ENCODE measurements at regions of chr17 and their contacts with region 1.

Region 1: GRCh38 chr17:75430159-75430974 is 24.9 kb upstream of the GRB2 start:
- DNase-seq: peak in 1 of 2 donors; percentile 14
- H3K4me3 ChIP-seq: no peak overlapping the region
- H3K27ac ChIP-seq: no peak overlapping the region
- H3K4me1 ChIP-seq: peaks cover 0 to 14% of the 10 kb centered on the region in 2 donors
- H3K27me3 ChIP-seq: no peaks in the 10 kb centered on the region
- CTCF ChIP-seq: no peak
- POLR2A ChIP-seq: no peak

Region 2: GRCh38 chr17:75261336-75262111 is 168.8 kb before region 1 on chr17 and contains the starts of genes GGA3 and MRPS7:
- intact Hi-C with region 1: no loop called
- DNase-seq: peak; percentile 95 to 96
- H3K4me3 ChIP-seq: peak within 1 kb of the TSS; percentile 43 to 99 (median 76)
- H3K27ac ChIP-seq: peak within 1 kb of the TSS; percentile 92 to 97 (median 96)
- H3K4me1 ChIP-seq: peaks cover 19 to 24% of the 10 kb centered on the region in 2 donors
- H3K27me3 ChIP-seq: no peaks in the 10 kb centered on the region
- CTCF ChIP-seq: peak in 1 of 6 experiments; percentile 19
- POLR2A ChIP-seq: peak; percentile 3 to 71
- total RNA-seq, gene GGA3: 22.5 to 38.4 (median 24.1) TPM
- total RNA-seq, gene MRPS7: 29.9 to 59.4 (median 41.0) TPM

Region 3: DNA sequence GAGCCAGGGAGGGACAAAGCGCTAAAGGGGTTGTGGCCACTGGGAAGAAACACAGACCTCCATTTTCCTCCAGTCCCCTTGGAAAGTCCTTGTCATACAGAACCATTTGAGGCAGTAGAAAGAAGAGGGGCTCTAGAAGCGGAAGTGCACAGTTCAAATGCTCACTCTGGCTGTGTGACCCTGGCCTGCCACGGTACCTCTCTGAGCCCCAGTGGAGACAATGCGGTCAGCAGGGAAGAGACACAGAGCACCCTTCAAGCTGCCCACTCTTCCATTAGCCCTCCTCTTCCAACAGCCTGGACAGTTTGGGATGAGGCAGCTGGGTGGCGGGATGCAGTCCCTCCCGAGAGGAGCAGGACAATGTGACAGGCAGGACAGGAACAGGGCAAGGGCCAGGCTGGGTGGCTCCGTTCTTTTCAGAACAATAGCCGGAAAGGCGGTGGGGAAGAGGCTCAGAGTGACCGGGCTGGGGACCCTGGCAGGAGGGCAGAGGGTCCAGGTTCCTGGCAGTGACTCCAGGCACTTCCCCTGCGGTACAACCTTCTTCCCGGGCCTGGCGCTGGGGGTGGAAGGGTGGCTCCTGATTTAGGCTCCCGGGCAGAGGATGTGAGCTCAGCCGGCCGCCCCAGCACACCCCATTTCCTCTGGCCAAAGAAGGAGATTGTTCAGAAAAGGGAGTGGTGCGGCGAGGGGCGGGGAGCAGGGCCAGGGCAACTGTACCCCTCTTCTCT is 79.3 kb after region 1 on chr17:
- intact Hi-C with region 1: loop called (anchors 5 kb)
- DNase-seq: peak; percentile 25 to 40
- H3K4me3 ChIP-seq: no peak overlapping the region
- H3K27ac ChIP-seq: peak overlapping the region; percentile 54 to 87 (median 70)
- H3K4me1 ChIP-seq: peaks cover 39 to 43% of the 10 kb centered on the region in 2 donors
- H3K27me3 ChIP-seq: no peaks in the 10 kb centered on the region
- CTCF ChIP-seq: no peak
- POLR2A ChIP-seq: no peak

Region 4: GRCh38 chr17:75524953-75525719 is 94.8 kb after region 1 on chr17 and contains the start of gene LLGL2:
- intact Hi-C with region 1: loop called (anchors 5 kb)
- DNase-seq: peak; percentile 89 to 91
- H3K4me3 ChIP-seq: peak within 1 kb of the TSS; percentile 53 to 82 (median 61)
- H3K27ac ChIP-seq: peak within 1 kb of the TSS; percentile 69 to 86 (median 80)
- H3K4me1 ChIP-seq: peaks cover 16 to 25% of the 10 kb centered on the region in 2 donors
- H3K27me3 ChIP-seq: no peaks in the 10 kb centered on the region
- CTCF ChIP-seq: peak in 3 of 6 experiments; percentile 30 to 55 (median 51)
- POLR2A ChIP-seq: peak in 1 of 2 donors; percentile 93
- total RNA-seq, gene LLGL2: 35.6 to 73.5 (median 53.8) TPM

Region 5: DNA sequence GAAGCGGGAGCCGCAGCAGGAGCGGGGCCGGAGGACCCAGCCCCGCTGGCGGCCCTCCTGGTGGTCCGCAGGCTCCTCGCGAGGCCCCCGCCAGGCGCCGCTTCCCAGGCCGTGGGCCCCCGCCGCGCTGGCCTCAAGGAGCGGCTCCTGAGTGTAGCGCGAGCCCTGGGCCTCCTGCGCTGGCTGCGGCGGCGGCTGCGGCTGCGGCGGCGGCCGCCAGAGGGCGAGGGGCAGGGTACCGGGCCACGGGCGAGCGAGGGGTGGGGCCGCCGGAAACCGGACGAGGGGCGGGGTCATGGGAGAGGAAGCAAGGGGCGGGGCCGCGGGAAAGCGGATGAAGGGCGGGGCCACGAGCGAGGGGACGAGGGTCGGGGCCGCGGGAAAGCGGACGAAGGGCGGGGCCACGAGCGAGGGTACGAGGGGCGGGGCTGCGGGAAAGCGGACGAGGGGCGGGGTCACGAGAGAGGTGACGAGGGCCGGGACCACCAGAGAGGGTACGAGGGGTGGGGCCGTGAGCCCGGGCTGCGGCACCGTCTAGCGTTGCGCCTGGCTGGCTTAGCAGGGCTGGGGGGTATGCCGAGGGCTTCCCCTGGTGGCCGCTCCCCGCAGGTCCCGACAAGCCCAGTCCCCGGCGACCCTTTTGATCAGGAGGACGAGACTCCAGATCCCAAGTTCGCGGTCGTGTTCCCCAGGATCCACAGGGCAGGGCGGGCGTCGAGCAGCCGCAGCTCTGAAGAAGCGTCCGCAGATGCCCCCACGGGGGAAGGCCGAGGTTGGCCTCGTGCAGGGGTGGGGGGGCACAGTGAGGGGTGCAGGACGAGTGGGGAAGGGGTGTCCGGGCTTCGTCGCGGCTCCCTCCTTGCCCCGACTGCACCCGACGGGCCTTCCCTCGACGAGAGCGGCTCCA is 158.9 kb after region 1 on chr17:
- intact Hi-C with region 1: loop called (anchors 2 kb)
- DNase-seq: peak; percentile 95 to 96
- H3K4me3 ChIP-seq: peak overlapping the region; percentile 53 to 67 (median 58)
- H3K27ac ChIP-seq: peak overlapping the region; percentile 92 to 97 (median 97)
- H3K4me1 ChIP-seq: peaks cover 7 to 15% of the 10 kb centered on the region in 2 donors
- H3K27me3 ChIP-seq: no peaks in the 10 kb centered on the region
- CTCF ChIP-seq: peak; percentile 21 to 95 (median 67)
- POLR2A ChIP-seq: peak in 1 of 2 donors; percentile 88

Measured in thyroid gland (tissue), 4 donors.